Activated CD4-positive, alpha-beta T cell treated with anti-CD3 and anti-CD28 coated beads, Interleukin-2, amount 10 ng/mL, durations not matched to agents 7 days and 5 days (primary cell): ENCODE measurements at regions of chr3 and their contacts with region 1.

Region 1: GRCh38 chr3:49339945-49340800 is at the start of gene USP4:
- DNase-seq: peak; percentile 95
- H3K4me3 Mint-ChIP-seq: peak within 1 kb of the TSS; percentile 92
- H3K27ac Mint-ChIP-seq: peak within 1 kb of the TSS; percentile 97
- H3K4me1 Mint-ChIP-seq: peaks cover 47% of the 10 kb centered on the region
- H3K27me3 Mint-ChIP-seq: no peaks in the 10 kb centered on the region
- total RNA-seq, gene USP4: 87.1 to 88.4 TPM

Region 2: GRCh38 chr3:49324768-49325167 is 15.4 kb before region 1 on chr3:
- CTCF ChIA-PET with region 1: interaction called, 13 read pairs
- POLR2A ChIA-PET with region 1: no interaction called
- DNase-seq: no peak
- H3K4me3 Mint-ChIP-seq: no peak overlapping the region
- H3K27ac Mint-ChIP-seq: no peak overlapping the region
- H3K4me1 Mint-ChIP-seq: no peaks in the 10 kb centered on the region
- H3K27me3 Mint-ChIP-seq: no peaks in the 10 kb centered on the region

Region 3: GRCh38 chr3:49351521-49352011 is 11.4 kb after region 1 on chr3:
- CTCF ChIA-PET with region 1: interaction called, 17 read pairs
- POLR2A ChIA-PET with region 1: no interaction called
- DNase-seq: no peak
- H3K4me3 Mint-ChIP-seq: no peak overlapping the region
- H3K27ac Mint-ChIP-seq: no peak overlapping the region
- H3K4me1 Mint-ChIP-seq: peaks cover 11% of the 10 kb centered on the region
- H3K27me3 Mint-ChIP-seq: no peaks in the 10 kb centered on the region

Region 4: DNA sequence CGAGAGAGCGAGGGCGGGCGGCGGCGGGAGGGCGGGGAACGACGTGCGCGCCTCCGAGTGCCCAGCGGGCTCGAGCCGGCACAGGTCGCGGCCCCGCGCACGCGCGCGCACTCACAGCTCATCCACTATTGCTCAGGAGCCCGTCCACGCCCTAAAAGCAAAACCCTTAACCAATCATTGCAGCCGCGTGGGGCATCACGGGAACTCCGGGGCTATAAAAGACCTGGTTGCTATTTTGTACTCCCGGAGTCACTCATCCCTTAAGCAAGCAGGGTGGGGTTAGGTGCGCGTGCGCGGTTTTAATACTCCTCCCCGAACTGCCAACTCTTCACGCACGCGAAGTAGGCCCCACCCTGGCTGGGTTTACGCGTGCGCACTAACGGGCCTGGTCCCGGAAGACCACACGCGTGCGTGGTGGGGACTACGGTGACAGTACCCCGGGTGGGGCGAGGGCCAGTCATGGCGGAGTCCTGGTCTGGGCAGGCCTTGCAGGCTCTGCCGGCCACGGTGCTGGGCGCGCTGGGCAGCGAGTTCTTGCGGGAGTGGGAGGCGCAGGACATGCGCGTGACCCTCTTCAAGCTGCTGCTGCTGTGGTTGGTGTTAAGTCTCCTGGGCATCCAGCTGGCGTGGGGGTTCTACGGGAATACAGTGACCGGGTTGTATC is 71.9 kb after region 1 on chr3 and contains the starts of genes RHOA and TCTA:
- CTCF ChIA-PET with region 1: interaction called, 10 read pairs
- POLR2A ChIA-PET with region 1: interaction called, 9 read pairs
- DNase-seq: peak; percentile 99
- H3K4me3 Mint-ChIP-seq: peak within 1 kb of the TSS; percentile 96
- H3K27ac Mint-ChIP-seq: peak within 1 kb of the TSS; percentile 92
- H3K4me1 Mint-ChIP-seq: peaks cover 65% of the 10 kb centered on the region
- H3K27me3 Mint-ChIP-seq: no peaks in the 10 kb centered on the region
- total RNA-seq, gene RHOA: 467 to 520 TPM
- total RNA-seq, gene TCTA: 23.3 to 24.8 TPM

Region 5: GRCh38 chr3:49454458-49454857 is 114.3 kb after region 1 on chr3:
- CTCF ChIA-PET with region 1: interaction called, 22 read pairs
- POLR2A ChIA-PET with region 1: interaction called, 4 read pairs
- DNase-seq: no peak
- H3K4me3 Mint-ChIP-seq: no peak overlapping the region
- H3K27ac Mint-ChIP-seq: peak overlapping the region; percentile 9
- H3K4me1 Mint-ChIP-seq: no peaks in the 10 kb centered on the region
- H3K27me3 Mint-ChIP-seq: no peaks in the 10 kb centered on the region